T-cell (primary cell): ENCODE measurements at regions of chr12 and their contacts with region 1.

Region 1: DNA sequence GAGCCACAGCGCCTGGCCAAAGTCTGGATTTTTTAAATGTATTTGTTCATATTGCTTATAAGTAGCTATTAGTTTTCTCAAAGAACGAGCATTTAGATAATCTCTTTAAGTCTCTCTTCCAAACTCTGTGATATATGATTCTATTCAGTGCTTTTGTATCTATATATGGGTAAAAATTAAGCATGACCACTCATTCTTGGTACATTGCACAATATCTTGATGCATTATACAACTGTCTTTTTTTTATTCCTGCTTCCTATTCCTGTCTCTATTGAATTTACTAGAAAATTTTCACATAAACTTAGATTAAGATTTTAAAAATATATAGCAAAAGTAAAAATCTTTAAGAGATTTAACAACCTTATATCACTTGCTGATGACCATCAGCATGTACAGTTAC is 29.1 kb downstream of the SOCS2 start:
- DNase-seq: no peak
- ATAC-seq: no peak
- H3K4me3 ChIP-seq: no peak overlapping the region
- H3K4me3 Mint-ChIP-seq: no peak overlapping the region
- H3K27ac ChIP-seq: no peak overlapping the region
- H3K27ac Mint-ChIP-seq: no peak overlapping the region
- H3K4me1 ChIP-seq: no peaks in the 10 kb centered on the region
- H3K4me1 Mint-ChIP-seq: no peaks in the 10 kb centered on the region
- H3K27me3 ChIP-seq: peaks cover 0 to 12% of the 10 kb centered on the region in 2 experiments
- H3K27me3 Mint-ChIP-seq: peaks cover 10 to 15% of the 10 kb centered on the region in 2 donors

Region 2: DNA sequence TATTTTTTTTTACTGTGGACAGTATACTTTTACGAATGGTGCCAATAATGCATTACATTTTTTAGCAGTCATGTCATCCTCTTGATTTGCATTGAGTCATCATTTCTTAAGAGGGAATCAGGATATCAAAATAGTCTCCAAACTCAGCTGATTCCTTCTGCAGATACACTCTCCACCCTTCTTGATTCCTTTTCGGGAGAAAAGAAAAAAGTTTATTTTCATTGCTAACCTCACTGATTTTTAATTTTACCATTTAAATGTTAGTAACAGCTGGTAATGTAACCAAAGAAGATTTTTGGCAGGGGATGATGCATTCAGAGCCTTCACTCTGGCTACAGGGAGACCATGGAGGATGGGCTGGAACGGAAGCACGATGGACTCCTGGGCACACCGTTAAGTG is 86.7 kb before region 1 on chr12:
- CTCF ChIA-PET with region 1: interaction called in 1 of 2 experiments, 14 read pairs
- POLR2A ChIA-PET with region 1: no interaction called
- DNase-seq: no peak
- ATAC-seq: no peak
- H3K4me3 ChIP-seq: no peak overlapping the region
- H3K4me3 Mint-ChIP-seq: no peak overlapping the region
- H3K27ac ChIP-seq: no peak overlapping the region
- H3K27ac Mint-ChIP-seq: no peak overlapping the region
- H3K4me1 ChIP-seq: no peaks in the 10 kb centered on the region
- H3K4me1 Mint-ChIP-seq: no peaks in the 10 kb centered on the region
- H3K27me3 ChIP-seq: no peaks in the 10 kb centered on the region
- H3K27me3 Mint-ChIP-seq: no peaks in the 10 kb centered on the region